ENCODE measurements at regions of chr6 and their contacts with region 1.

Region 1: GRCh38 chr6:139291813-139292619 is at the start of gene TXLNB:
- DNase-seq: peak; percentile 62 to 88 (median 80)
- ATAC-seq: peak; percentile 80 to 89 (median 84)
- H3K4me3 ChIP-seq: peak within 1 kb of the TSS; percentile 16 to 62 (median 47)
- H3K27ac ChIP-seq: peak within 1 kb of the TSS; percentile 78 to 94 (median 88)
- H3K4me1 ChIP-seq: peaks cover 3 to 57% (median 27%) of the 10 kb centered on the region in 12 donors
- H3K27me3 ChIP-seq: no peaks in the 10 kb centered on the region
- CTCF ChIP-seq: peak in 3 of 12 donors; percentile 9 to 30 (median 19)
- POLR2A ChIP-seq: no peak
- total RNA-seq, gene TXLNB: 80.6 to 170 (median 138) TPM

Region 2: GRCh38 chr6:137601471-137601870 is 1690.5 kb before region 1 on chr6:
- intact Hi-C with region 1: no loop called
- DNase-seq: no peak
- ATAC-seq: no peak
- H3K4me3 ChIP-seq: no peak overlapping the region
- H3K27ac ChIP-seq: no peak overlapping the region
- H3K4me1 ChIP-seq: no peaks in the 10 kb centered on the region
- H3K27me3 ChIP-seq: peaks cover 0 to 39% (median 3%) of the 10 kb centered on the region in 9 donors
- CTCF ChIP-seq: no peak
- POLR2A ChIP-seq: no peak

Region 3: GRCh38 chr6:139134817-139135581 is 157.0 kb before region 1 on chr6 and contains the start of gene HECA:
- intact Hi-C with region 1: loop called in 3 of 10 experiments (anchors 5 kb)
- DNase-seq: peak; percentile 98 to 100 (median 99)
- ATAC-seq: peak; percentile 93 to 96 (median 94)
- H3K4me3 ChIP-seq: peak within 1 kb of the TSS; percentile 58 to 98 (median 82)
- H3K27ac ChIP-seq: peak within 1 kb of the TSS; percentile 88 to 99 (median 96)
- H3K4me1 ChIP-seq: peaks cover 5 to 76% (median 37%) of the 10 kb centered on the region in 12 donors
- H3K27me3 ChIP-seq: no peaks in the 10 kb centered on the region
- CTCF ChIP-seq: no peak
- POLR2A ChIP-seq: peak; percentile 86 to 96
- total RNA-seq, gene HECA: 38.2 to 67.0 (median 48.3) TPM

Region 4: DNA sequence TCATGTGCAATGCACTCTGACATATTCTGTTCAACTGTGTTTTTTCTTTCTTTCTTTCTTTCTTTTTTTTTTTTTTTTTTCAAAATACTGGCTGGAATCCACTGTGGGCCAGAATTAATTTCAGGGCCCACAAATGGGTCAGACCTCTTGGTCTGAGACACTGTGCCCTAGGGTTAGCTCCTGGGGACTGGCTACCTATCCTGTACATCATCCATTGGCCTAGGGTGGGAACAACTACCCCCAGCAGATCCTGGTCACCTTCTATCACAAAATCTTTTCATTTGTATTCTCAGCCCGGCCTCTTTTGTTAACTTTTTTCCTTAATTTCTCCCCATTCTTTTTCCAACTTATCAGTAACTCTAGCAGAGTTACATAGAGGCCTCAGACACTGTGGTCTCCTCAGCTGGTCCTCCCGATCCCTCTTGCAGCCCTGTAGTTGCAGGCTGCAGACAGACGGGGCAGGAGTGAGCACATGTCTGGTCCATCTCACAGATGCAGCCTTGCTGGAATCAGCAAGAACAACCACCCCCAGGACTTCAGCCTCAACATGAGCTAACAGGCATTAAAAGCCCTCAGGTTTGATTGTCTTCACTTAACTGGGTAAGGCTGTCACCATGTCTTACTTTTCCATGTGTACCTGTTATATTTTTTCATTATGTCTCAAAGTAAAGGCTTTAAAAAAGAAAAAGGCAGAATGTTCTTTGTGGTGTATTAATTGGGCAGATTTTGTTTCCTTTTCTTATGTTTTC is 41.5 kb before region 1 on chr6:
- intact Hi-C with region 1: loop called in 3 of 10 experiments (anchors 1 to 5 kb)
- DNase-seq: peak; percentile 65 to 71 (median 67)
- ATAC-seq: peak; percentile 59 to 92 (median 88)
- H3K4me3 ChIP-seq: no peak overlapping the region
- H3K27ac ChIP-seq: peak overlapping the region; percentile 54 to 85 (median 79)
- H3K4me1 ChIP-seq: peaks cover 4 to 37% (median 23%) of the 10 kb centered on the region in 12 donors
- H3K27me3 ChIP-seq: no peaks in the 10 kb centered on the region
- CTCF ChIP-seq: peak; percentile 52 to 80 (median 71)
- POLR2A ChIP-seq: no peak

Region 5: GRCh38 chr6:139270249-139270648 is 21.8 kb before region 1 on chr6:
- intact Hi-C with region 1: loop called in 1 of 10 experiments (anchors 1 kb)
- DNase-seq: no peak
- ATAC-seq: no peak
- H3K4me3 ChIP-seq: no peak overlapping the region
- H3K27ac ChIP-seq: peak overlapping the region in 1 of 12 donors; percentile 38
- H3K4me1 ChIP-seq: peaks cover 0 to 8% (median 0%) of the 10 kb centered on the region in 12 donors
- H3K27me3 ChIP-seq: no peaks in the 10 kb centered on the region
- CTCF ChIP-seq: no peak
- POLR2A ChIP-seq: no peak

Region 6: DNA sequence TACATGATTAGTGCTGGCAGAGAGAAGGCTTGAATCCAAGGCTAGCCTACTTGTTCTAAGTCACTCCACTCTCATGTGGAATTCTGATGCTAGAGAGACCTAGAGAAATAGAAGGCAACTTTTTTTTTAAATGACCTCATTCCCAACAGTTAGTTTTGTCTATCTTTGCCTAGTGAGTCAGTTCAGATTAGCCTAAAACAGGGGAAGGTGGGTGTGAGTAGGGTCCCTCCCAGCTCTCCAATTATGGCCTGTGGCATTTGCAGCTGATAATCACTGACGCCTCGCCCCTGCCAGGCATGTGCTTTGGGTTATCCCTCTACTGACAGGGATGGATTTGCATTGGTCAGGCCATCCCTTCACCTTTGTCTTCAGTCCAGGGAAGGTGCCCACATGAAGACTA is 13.8 kb before region 1 on chr6:
- intact Hi-C with region 1: loop called in 1 of 10 experiments (anchors 2 kb)
- DNase-seq: peak in 2 of 5 donors; percentile 39 to 40
- ATAC-seq: peak; percentile 45 to 89 (median 78)
- H3K4me3 ChIP-seq: no peak overlapping the region
- H3K27ac ChIP-seq: peak overlapping the region in 11 of 12 donors; percentile 41 to 85 (median 70)
- H3K4me1 ChIP-seq: peaks cover 0 to 49% (median 21%) of the 10 kb centered on the region in 12 donors
- H3K27me3 ChIP-seq: no peaks in the 10 kb centered on the region
- CTCF ChIP-seq: no peak
- POLR2A ChIP-seq: no peak

Region 7: GRCh38 chr6:139334806-139335446 is 42.9 kb after region 1 on chr6:
- intact Hi-C with region 1: loop called in 1 of 10 experiments (anchors 5 kb)
- DNase-seq: peak in 1 of 5 donors; percentile 21
- ATAC-seq: peak in 3 of 4 donors; percentile 67 to 84 (median 69)
- H3K4me3 ChIP-seq: no peak overlapping the region
- H3K27ac ChIP-seq: peak overlapping the region in 11 of 12 donors; percentile 0 to 76 (median 55)
- H3K4me1 ChIP-seq: peaks cover 0 to 62% (median 7%) of the 10 kb centered on the region in 12 donors
- H3K27me3 ChIP-seq: no peaks in the 10 kb centered on the region
- CTCF ChIP-seq: no peak
- POLR2A ChIP-seq: no peak

Region 8: GRCh38 chr6:139355172-139355571 is 63.2 kb after region 1 on chr6:
- intact Hi-C with region 1: loop called in 2 of 10 experiments (anchors 5 kb)
- DNase-seq: no peak
- ATAC-seq: no peak
- H3K4me3 ChIP-seq: no peak overlapping the region
- H3K27ac ChIP-seq: no peak overlapping the region
- H3K4me1 ChIP-seq: peaks cover 0 to 10% (median 1%) of the 10 kb centered on the region in 12 donors
- H3K27me3 ChIP-seq: no peaks in the 10 kb centered on the region
- CTCF ChIP-seq: no peak
- POLR2A ChIP-seq: no peak